ENCODE measurements at regions of chr10 and their contacts with region 1.

Region 1: GRCh38 chr10:60208676-60209269 is 180.9 kb downstream of the ANK3 start:
- DNase-seq: peak; percentile 34 to 52 (median 52)
- H3K4me3 ChIP-seq: no peak overlapping the region
- H3K27ac ChIP-seq: no peak overlapping the region
- H3K4me1 ChIP-seq: peaks cover 0 to 6% (median 3%) of the 10 kb centered on the region in 4 experiments
- H3K27me3 ChIP-seq: no peaks in the 10 kb centered on the region

Region 2: GRCh38 chr10:60099998-60100747 is 108.6 kb before region 1 on chr10:
- CTCF ChIA-PET with region 1: interaction called, 55 read pairs
- POLR2A ChIA-PET with region 1: interaction called, 4 read pairs
- DNase-seq: peak; percentile 79 to 83 (median 83)
- H3K4me3 ChIP-seq: no peak overlapping the region
- H3K27ac ChIP-seq: no peak overlapping the region
- H3K4me1 ChIP-seq: no peaks in the 10 kb centered on the region
- H3K27me3 ChIP-seq: no peaks in the 10 kb centered on the region

Region 3: DNA sequence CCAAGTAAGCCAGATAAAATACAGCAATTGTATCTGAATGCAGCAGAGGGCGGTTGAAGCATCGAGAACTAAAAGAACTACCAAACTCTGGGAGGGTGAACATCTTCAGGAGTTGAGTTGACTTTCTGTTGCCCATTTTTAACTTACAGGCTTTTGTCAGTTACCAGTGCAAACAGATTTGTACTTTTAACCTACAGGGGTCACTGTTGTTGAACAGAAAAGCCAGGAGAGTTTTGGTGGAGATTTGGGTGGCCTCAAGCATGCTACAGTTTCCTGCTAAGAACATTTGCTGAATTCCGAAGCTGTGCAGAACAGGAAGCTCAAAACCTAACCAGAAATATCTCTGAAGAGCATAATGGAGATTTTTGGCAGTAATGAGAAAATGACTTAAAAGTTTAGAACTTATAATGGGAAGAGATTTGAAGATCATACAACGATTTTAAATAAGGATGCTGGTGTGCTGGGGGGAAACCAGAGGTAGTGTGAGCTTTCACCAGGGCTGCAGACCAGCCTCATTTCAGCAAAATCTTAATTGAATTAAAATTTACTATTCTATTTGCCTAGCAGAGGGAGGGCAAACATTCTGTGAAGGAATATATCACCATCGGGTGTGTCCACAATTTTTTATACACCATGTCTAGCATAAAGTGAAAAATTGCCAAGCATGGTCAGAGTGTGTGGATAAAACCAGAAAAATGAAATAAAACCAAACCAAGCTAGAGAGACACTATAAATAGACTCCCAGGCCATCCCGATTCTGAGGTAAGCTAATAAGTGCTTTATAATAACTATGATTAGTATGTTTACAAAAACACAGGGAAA is 93.8 kb before region 1 on chr10:
- CTCF ChIA-PET with region 1: interaction called, 42 read pairs
- POLR2A ChIA-PET with region 1: no interaction called
- DNase-seq: peak; percentile 63 to 84 (median 83)
- H3K4me3 ChIP-seq: no peak overlapping the region
- H3K27ac ChIP-seq: no peak overlapping the region
- H3K4me1 ChIP-seq: peaks cover 0 to 5% (median 2%) of the 10 kb centered on the region in 4 experiments
- H3K27me3 ChIP-seq: no peaks in the 10 kb centered on the region

Region 4: GRCh38 chr10:60197206-60197605 is 11.6 kb before region 1 on chr10:
- CTCF ChIA-PET with region 1: interaction called, 12 read pairs
- POLR2A ChIA-PET with region 1: no interaction called
- DNase-seq: no peak
- H3K4me3 ChIP-seq: no peak overlapping the region
- H3K27ac ChIP-seq: no peak overlapping the region
- H3K4me1 ChIP-seq: no peaks in the 10 kb centered on the region
- H3K27me3 ChIP-seq: no peaks in the 10 kb centered on the region